GM12878 (cell line): ENCODE measurements at regions of chr5 and their contacts with region 1.

Region 1: GRCh38 chr5:141512390-141512910 is 23.6 kb downstream of the PCDHGC5 start:
- DNase-seq: no peak
- ATAC-seq: peak; percentile 44
- H3K4me3 ChIP-seq: peak overlapping the region; percentile 69
- H3K27ac ChIP-seq: peak overlapping the region; percentile 90
- H3K4me1 ChIP-seq: peaks cover 76% of the 10 kb centered on the region
- H3K27me3 ChIP-seq: no peaks in the 10 kb centered on the region
- CTCF ChIP-seq: peak; percentile 81 to 94 (median 89)
- EP300 ChIP-seq: no peak
- POLR2A ChIP-seq: no peak; the same call in 1 of the 2 replicates
- RAD21 ChIP-seq: peak; percentile 69

Region 2: GRCh38 chr5:141354900-141355469 is 157.5 kb before region 1 on chr5 and contains the start of gene PCDHGA4:
- CTCF ChIA-PET with region 1: no interaction called
- POLR2A ChIA-PET with region 1: no interaction called
- RAD21 ChIA-PET with region 1: no interaction called
- SMC1A ChIA-PET with region 1: no interaction called
- in situ Hi-C with region 1: no loop called
- intact Hi-C with region 1: no loop called
- DNase-seq: no peak
- ATAC-seq: no peak
- H3K4me3 ChIP-seq: no peak within 1 kb of the TSS
- H3K27ac ChIP-seq: no peak within 1 kb of the TSS
- H3K4me1 ChIP-seq: no peaks in the 10 kb centered on the region
- H3K27me3 ChIP-seq: no peaks in the 10 kb centered on the region
- CTCF ChIP-seq: peak; percentile 15 to 28 (median 19); a peak in 3 of 6 replicates
- EP300 ChIP-seq: no peak
- POLR2A ChIP-seq: no peak
- RAD21 ChIP-seq: peak; percentile 14; the same call in 1 of the 2 replicates
- polyA plus RNA-seq, gene PCDHGA4: not detected

Region 3: GRCh38 chr5:141412854-141413539 is 99.5 kb before region 1 on chr5 and contains the start of gene PCDHGA10:
- CTCF ChIA-PET with region 1: interaction called, 41 read pairs
- POLR2A ChIA-PET with region 1: interaction called, 3 read pairs
- RAD21 ChIA-PET with region 1: interaction called, 12 read pairs
- SMC1A ChIA-PET with region 1: interaction called, 5 read pairs
- in situ Hi-C with region 1: no loop called
- intact Hi-C with region 1: no loop called
- DNase-seq: peak; percentile 27
- ATAC-seq: peak; percentile 89
- H3K4me3 ChIP-seq: peak within 1 kb of the TSS; percentile 76
- H3K27ac ChIP-seq: no peak within 1 kb of the TSS
- H3K4me1 ChIP-seq: no peaks in the 10 kb centered on the region; the same call in 1 of the 2 replicates
- H3K27me3 ChIP-seq: peaks cover 0 to 1% of the 10 kb centered on the region in 2 experiments; a peak in 1 of 4 replicates
- CTCF ChIP-seq: peak; percentile 81 to 86 (median 83)
- EP300 ChIP-seq: no peak
- POLR2A ChIP-seq: no peak
- RAD21 ChIP-seq: peak; percentile 86
- polyA plus RNA-seq, gene PCDHGA10: 0.58 to 0.68 TPM

Region 4: GRCh38 chr5:141430332-141431113 is 81.9 kb before region 1 on chr5 and contains the start of gene PCDHGA12:
- CTCF ChIA-PET with region 1: interaction called, 61 read pairs
- POLR2A ChIA-PET with region 1: no interaction called
- RAD21 ChIA-PET with region 1: interaction called, 16 read pairs
- SMC1A ChIA-PET with region 1: interaction called, 9 read pairs
- in situ Hi-C with region 1: no loop called
- intact Hi-C with region 1: loop called (anchors 1 kb)
- DNase-seq: peak; percentile 37
- ATAC-seq: peak; percentile 96
- H3K4me3 ChIP-seq: peak within 1 kb of the TSS; percentile 22; the same call in 1 of the 2 replicates
- H3K27ac ChIP-seq: no peak within 1 kb of the TSS
- H3K4me1 ChIP-seq: no peaks in the 10 kb centered on the region; the same call in 1 of the 2 replicates
- H3K27me3 ChIP-seq: no peaks in the 10 kb centered on the region
- CTCF ChIP-seq: peak; percentile 62 to 82 (median 68)
- EP300 ChIP-seq: no peak
- POLR2A ChIP-seq: no peak
- RAD21 ChIP-seq: peak; percentile 56
- polyA plus RNA-seq, gene PCDHGA12: not detected

Region 5: GRCh38 chr5:141484641-141485311 is 27.7 kb before region 1 on chr5 and contains the start of gene PCDHGC4:
- CTCF ChIA-PET with region 1: interaction called, 90 read pairs
- POLR2A ChIA-PET with region 1: interaction called, 3 read pairs
- RAD21 ChIA-PET with region 1: interaction called, 3 read pairs
- SMC1A ChIA-PET with region 1: interaction called, 9 read pairs
- in situ Hi-C with region 1: no loop called
- intact Hi-C with region 1: no loop called
- DNase-seq: no peak
- ATAC-seq: peak; percentile 73
- H3K4me3 ChIP-seq: peak within 1 kb of the TSS; percentile 36
- H3K27ac ChIP-seq: no peak within 1 kb of the TSS
- H3K4me1 ChIP-seq: peaks cover 6% of the 10 kb centered on the region
- H3K27me3 ChIP-seq: peaks cover 0 to 3% of the 10 kb centered on the region in 2 experiments; a peak in 2 of 4 replicates
- CTCF ChIP-seq: no peak
- EP300 ChIP-seq: no peak
- POLR2A ChIP-seq: no peak
- RAD21 ChIP-seq: no peak
- polyA plus RNA-seq, gene PCDHGC4: 0.13 to 0.18 TPM

Region 6: GRCh38 chr5:141524604-141525597 is 12.5 kb after region 1 on chr5:
- CTCF ChIA-PET with region 1: interaction called, 194 read pairs
- POLR2A ChIA-PET with region 1: interaction called, 10 read pairs
- RAD21 ChIA-PET with region 1: interaction called, 77 read pairs
- SMC1A ChIA-PET with region 1: interaction called, 176 read pairs
- in situ Hi-C with region 1: no loop called
- intact Hi-C with region 1: loop called (anchors 1 kb)
- DNase-seq: no peak
- ATAC-seq: peak; percentile 91
- H3K4me3 ChIP-seq: no peak overlapping the region
- H3K27ac ChIP-seq: peak overlapping the region; percentile 9; the same call in 1 of the 2 replicates
- H3K4me1 ChIP-seq: peaks cover 26% of the 10 kb centered on the region
- H3K27me3 ChIP-seq: no peaks in the 10 kb centered on the region
- CTCF ChIP-seq: peak; percentile 98 to 100 (median 99)
- EP300 ChIP-seq: 0 out of 4 replicates have a peak, but pooled peaks of 1 of the 2 experiments have one; percentile 38
- POLR2A ChIP-seq: 0 out of 2 replicates have a peak, but pooled peaks have one; percentile 34
- RAD21 ChIP-seq: peak; percentile 73

Region 7: DNA sequence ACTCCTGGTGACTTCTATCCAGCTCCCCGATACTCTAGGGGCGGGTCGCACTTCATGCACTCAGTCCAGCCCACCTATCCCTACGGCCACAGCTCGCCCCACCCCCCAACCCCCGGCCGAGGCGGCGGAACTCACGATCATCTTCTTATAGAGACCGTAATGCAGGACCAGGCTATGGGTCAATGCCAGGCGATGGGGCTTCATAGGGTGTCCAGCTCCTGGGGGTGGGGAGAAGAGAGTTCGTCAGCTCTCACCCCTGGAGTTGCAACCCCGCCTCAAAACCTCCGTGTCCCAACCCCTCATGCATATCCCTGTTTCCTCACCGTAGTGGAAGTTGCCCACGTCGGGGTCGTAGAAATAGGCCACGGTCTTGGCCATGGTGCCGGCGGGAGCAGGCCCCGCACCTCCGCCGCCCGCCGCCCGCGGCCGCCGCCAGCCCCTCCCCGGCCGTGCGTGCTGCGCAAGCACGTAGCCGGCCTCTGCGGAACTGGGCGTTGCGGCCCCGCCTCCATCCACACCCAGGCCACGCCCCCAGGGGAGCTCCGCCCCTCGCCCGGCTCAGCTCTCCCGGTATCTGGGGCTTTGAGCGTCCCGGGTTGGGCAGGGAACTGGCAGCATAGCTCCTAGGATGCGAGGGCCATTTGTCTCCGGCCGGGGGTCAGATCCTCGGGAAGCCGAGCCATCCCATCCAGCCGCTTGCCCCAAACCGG is 124.1 kb after region 1 on chr5 and contains the starts of genes HDAC3 and RELL2:
- CTCF ChIA-PET with region 1: interaction called, 3 read pairs
- POLR2A ChIA-PET with region 1: no interaction called
- RAD21 ChIA-PET with region 1: interaction called, 3 read pairs
- SMC1A ChIA-PET with region 1: interaction called, 5 read pairs
- in situ Hi-C with region 1: no loop called
- intact Hi-C with region 1: loop called (anchors 5 kb)
- DNase-seq: no peak
- ATAC-seq: peak; percentile 86
- H3K4me3 ChIP-seq: peak within 1 kb of the TSS; percentile 85
- H3K27ac ChIP-seq: peak within 1 kb of the TSS; percentile 86
- H3K4me1 ChIP-seq: peaks cover 41% of the 10 kb centered on the region
- H3K27me3 ChIP-seq: no peaks in the 10 kb centered on the region
- CTCF ChIP-seq: no peak
- EP300 ChIP-seq: no peak
- POLR2A ChIP-seq: peak; percentile 72
- RAD21 ChIP-seq: no peak
- polyA plus RNA-seq, gene HDAC3: 62.2 to 108 TPM
- polyA plus RNA-seq, gene RELL2: 0.23 to 0.64 TPM

Region 8: DNA sequence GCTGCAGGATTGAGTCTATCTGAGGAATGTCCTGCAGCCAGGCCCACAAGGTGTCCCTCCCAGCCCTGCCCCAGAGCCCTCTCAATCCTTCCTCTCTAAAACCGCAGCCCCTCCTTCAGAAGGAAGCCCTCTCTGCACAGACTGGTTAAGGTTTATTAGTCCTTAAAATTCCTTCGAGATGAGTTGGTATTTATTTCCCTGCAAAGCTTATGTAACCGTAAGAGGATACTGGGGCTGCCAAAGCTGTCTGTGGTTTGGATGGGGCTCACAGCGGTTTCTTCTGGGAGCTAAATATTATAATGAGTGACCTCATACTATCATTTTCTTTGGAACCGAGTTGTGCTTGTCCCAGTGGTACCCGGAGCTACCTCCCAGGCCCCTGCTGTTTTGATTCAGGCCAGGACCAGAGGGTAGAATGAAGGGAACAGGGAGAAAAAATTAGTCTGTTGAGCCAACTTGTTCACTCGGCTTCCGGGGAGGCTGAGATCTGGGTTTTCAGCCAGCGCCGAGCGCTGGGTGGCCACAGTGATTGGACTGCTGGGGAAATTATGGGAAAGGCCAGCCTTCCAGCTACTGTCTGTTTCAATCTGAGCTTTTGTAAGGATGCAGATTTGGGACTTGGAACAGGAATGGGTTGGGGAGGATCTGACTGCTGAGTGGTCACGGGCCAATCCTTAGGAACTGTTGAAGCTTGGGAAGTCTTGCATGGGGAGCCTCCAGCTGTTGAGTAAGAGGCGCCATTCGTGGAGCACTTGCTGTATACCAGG is 703.6 kb after region 1 on chr5:
- CTCF ChIA-PET with region 1: no interaction called
- POLR2A ChIA-PET with region 1: no interaction called
- RAD21 ChIA-PET with region 1: no interaction called
- SMC1A ChIA-PET with region 1: no interaction called
- in situ Hi-C with region 1: no loop called
- intact Hi-C with region 1: no loop called
- DNase-seq: no peak
- ATAC-seq: no peak
- H3K4me3 ChIP-seq: no peak overlapping the region
- H3K27ac ChIP-seq: no peak overlapping the region
- H3K4me1 ChIP-seq: no peaks in the 10 kb centered on the region
- H3K27me3 ChIP-seq: no peaks in the 10 kb centered on the region; a peak in 1 of 4 replicates
- CTCF ChIP-seq: no peak
- EP300 ChIP-seq: no peak
- POLR2A ChIP-seq: no peak
- RAD21 ChIP-seq: no peak